H1 (cell line): ENCODE measurements at regions of chr1 and their contacts with region 1.

Region 1: DNA sequence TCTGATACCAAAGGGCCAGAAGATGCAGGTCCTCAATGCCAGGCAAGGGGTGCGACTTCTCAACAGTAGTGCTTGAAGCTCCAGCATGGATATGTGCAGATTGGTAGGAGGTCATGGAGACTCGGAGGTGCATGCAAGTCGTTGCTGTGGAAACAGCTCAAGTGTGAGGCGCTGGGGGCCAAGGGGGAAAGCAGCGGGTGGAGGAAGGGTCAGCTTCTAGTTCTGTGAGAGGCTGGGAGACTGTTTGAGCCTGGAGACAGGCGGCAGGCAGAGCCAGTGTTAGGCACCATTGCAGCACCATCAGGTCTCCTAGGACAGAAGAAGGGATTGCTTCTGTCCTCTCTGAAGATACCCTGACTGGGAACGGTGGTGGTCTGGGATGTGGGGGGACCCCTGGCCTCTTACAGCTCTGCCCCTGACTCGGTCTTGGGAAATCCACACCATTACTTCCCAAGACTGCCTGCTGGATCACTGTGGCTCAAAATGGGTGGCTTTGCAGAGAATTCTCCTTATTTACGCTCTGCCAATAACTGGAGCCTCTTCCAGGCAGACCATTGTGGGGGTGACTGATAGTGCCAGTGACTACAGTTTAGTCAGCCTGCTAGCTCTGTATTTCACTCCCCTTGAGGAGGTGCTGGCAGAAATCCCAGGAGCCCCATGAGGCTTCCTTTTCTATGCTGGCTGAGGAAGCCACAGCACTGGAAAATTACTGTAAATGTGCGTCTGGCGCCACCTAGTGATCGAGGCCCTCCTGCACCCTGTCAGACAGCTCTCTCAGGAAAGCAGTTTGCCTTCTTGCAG is 46.3 kb upstream of the VANGL1 start:
- DNase-seq: peak; percentile 68 to 92
- H3K4me3 ChIP-seq: no peak overlapping the region; a peak in 1 of 8 replicates
- H3K27ac ChIP-seq: no peak overlapping the region
- H3K4me1 ChIP-seq: no peaks in the 10 kb centered on the region
- H3K27me3 ChIP-seq: no peaks in the 10 kb centered on the region
- CTCF ChIP-seq: peak; percentile 89 to 97 (median 96)
- EP300 ChIP-seq: no peak
- POLR2A ChIP-seq: no peak
- RAD21 ChIP-seq: peak; percentile 95

Region 2: DNA sequence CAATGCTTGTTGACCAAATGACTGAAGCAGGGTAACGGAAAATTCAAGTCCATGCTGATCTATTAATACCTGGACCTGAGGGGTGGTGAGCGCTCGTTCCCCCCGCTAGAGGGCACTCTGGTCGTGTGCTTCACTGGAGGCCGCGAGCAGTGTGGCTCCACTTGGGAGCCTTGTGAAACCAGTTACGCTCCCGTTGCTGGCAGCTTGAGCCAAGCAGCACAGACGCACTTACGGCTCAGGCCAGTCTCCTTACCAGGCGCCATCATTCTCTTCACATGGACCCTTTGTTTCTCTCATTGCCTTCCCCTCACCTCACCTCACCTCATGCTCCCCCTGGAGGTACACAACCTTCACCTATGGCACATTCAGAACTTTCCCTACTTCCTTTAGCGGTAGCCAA is 456.5 kb before region 1 on chr1:
- CTCF ChIA-PET with region 1: interaction called, 88 read pairs
- POLR2A ChIA-PET with region 1: no interaction called
- DNase-seq: peak; percentile 82 to 86
- H3K4me3 ChIP-seq: no peak overlapping the region
- H3K27ac ChIP-seq: no peak overlapping the region
- H3K4me1 ChIP-seq: peaks cover 0 to 2% (median 0%) of the 10 kb centered on the region in 4 experiments; a peak in 2 of 7 replicates
- H3K27me3 ChIP-seq: no peaks in the 10 kb centered on the region
- CTCF ChIP-seq: peak; percentile 89 to 93 (median 89)
- EP300 ChIP-seq: no peak
- POLR2A ChIP-seq: no peak
- RAD21 ChIP-seq: peak; percentile 94 to 95

Region 3: DNA sequence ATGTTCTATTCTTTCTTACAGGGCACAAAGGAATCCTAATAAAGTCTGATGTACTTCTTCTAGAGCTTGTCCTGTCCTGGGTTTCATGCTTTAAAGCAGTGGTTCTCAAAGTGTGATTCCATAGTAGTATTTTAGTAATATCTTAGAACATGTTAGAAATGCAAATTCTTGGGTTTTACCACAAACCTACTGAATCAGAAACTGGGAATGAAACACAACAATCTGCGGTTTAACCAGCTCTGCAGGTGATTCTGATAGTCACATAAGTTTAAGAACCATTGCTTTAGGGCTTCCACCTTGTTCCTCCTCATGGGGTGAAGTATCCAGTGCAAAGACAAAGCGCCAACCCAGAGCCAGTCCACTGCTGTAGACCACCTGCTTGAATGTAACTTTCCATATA is 298.5 kb before region 1 on chr1:
- CTCF ChIA-PET with region 1: no interaction called
- POLR2A ChIA-PET with region 1: no interaction called
- DNase-seq: no peak
- H3K4me3 ChIP-seq: no peak overlapping the region
- H3K27ac ChIP-seq: no peak overlapping the region
- H3K4me1 ChIP-seq: peaks cover 0 to 7% (median 3%) of the 10 kb centered on the region in 4 experiments; a peak in 3 of 7 replicates
- H3K27me3 ChIP-seq: 0 out of 7 replicates have a peak, but pooled peaks cover 0 to 1% (median 0%) of the 10 kb centered on the region in 4 experiments
- CTCF ChIP-seq: no peak
- EP300 ChIP-seq: no peak
- POLR2A ChIP-seq: no peak
- RAD21 ChIP-seq: no peak

Region 4: DNA sequence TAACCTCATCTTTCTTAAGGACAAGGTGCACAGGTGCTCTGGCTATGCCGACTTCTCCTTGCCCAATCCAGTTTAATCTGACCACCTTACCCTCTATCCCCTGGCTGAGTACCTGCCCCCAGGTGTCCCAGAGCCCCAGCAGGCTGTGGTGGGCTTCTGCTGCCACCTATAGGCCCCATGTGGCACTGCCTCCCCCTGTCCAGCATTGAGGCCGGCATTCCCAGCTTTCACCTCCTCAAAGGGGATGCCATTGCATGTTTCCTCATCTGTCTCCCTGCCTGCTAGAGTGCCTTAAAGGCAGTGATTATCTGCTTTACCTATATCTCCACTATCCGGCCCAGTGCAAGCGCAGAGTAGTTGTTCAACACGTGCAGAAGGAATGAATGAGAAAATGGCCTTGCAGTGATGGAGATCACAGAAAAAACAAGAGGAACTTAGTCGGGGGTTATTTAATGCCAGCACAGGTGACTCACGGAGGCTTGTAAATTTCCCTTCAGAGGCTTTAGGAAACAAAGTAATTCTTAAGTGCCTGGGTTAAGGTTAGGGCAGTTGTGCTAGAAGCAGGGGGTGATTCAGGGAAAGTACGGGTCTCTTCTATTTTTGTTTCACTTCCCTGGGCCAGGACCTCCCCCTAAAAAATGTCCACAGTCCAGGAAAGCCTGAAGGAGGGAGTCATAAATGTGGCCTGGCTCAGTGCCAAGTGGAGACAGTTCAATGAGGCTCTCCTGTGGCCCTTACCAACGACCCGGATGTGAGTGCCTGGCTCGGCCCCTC is 125.6 kb before region 1 on chr1:
- CTCF ChIA-PET with region 1: interaction called, 31 read pairs
- POLR2A ChIA-PET with region 1: no interaction called
- DNase-seq: peak; percentile 50 to 90
- H3K4me3 ChIP-seq: no peak overlapping the region
- H3K27ac ChIP-seq: no peak overlapping the region
- H3K4me1 ChIP-seq: no peaks in the 10 kb centered on the region
- H3K27me3 ChIP-seq: no peaks in the 10 kb centered on the region
- CTCF ChIP-seq: peak; percentile 96 to 100 (median 98)
- EP300 ChIP-seq: no peak
- POLR2A ChIP-seq: no peak
- RAD21 ChIP-seq: peak; percentile 99

Region 5: DNA sequence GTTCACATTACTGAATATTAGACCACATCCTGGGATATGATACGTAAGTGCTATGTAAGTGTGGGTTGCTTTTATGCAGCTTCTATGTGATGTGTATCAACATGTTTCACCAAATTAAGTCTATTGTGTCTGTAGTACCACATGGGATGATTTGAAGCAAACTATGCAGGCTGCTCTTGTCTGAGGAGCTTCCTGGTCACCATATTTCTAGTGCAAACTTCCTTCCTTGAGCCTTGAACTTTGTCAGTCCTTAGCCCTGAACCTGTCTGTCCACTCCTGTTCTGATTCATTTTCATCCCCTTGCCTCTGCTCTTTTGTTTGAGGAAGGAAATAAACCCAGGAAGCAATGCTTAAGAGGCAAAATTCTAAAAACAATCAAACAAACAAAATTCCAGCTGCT is 71.2 kb before region 1 on chr1:
- CTCF ChIA-PET with region 1: interaction called, 13 read pairs
- POLR2A ChIA-PET with region 1: no interaction called
- DNase-seq: no peak
- H3K4me3 ChIP-seq: no peak overlapping the region
- H3K27ac ChIP-seq: no peak overlapping the region
- H3K4me1 ChIP-seq: peaks cover 0 to 2% (median 0%) of the 10 kb centered on the region in 4 experiments; a peak in 1 of 7 replicates
- H3K27me3 ChIP-seq: no peaks in the 10 kb centered on the region; a peak in 1 of 7 replicates
- CTCF ChIP-seq: no peak
- EP300 ChIP-seq: no peak
- POLR2A ChIP-seq: no peak
- RAD21 ChIP-seq: no peak

Region 6: DNA sequence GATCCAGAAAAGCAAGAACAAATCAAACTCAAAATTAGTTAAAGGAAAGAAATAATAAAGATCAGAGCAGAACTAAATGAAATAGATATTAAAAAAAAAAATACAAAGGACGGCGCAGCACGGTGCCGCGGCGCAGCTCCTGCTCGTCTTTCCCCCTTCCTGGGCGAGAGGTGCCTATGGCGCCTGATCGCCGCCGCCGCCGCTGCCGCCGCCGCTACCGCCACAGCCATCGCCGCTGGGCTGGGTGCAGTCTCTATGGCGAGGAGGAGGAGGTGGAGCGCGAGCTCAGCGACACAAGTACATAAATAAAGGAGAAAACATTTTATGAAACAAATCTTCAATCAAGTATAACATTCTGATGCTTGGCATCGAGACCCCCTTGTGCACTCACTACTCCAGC is 31.3 kb before region 1 on chr1:
- CTCF ChIA-PET with region 1: interaction called, 11 read pairs
- POLR2A ChIA-PET with region 1: no interaction called
- DNase-seq: peak in 1 of 2 experiments; percentile 68
- H3K4me3 ChIP-seq: peak overlapping the region; percentile 14 to 53 (median 26); a peak in 5 of 8 replicates
- H3K27ac ChIP-seq: no peak overlapping the region
- H3K4me1 ChIP-seq: no peaks in the 10 kb centered on the region
- H3K27me3 ChIP-seq: peaks cover 0 to 8% (median under 1%) of the 10 kb centered on the region in 4 experiments; a peak in 5 of 7 replicates
- CTCF ChIP-seq: no peak
- EP300 ChIP-seq: peak in 1 of 2 experiments; percentile 27; a peak in 1 of 3 replicates
- POLR2A ChIP-seq: no peak
- RAD21 ChIP-seq: no peak

Region 7: GRCh38 chr1:115706587-115707425 is 111.3 kb after region 1 on chr1:
- CTCF ChIA-PET with region 1: interaction called, 27 read pairs
- POLR2A ChIA-PET with region 1: no interaction called
- DNase-seq: no peak
- H3K4me3 ChIP-seq: no peak overlapping the region
- H3K27ac ChIP-seq: no peak overlapping the region
- H3K4me1 ChIP-seq: no peaks in the 10 kb centered on the region
- H3K27me3 ChIP-seq: no peaks in the 10 kb centered on the region
- CTCF ChIP-seq: peak in 2 of 3 experiments; percentile 64 to 70; a peak in 3 of 4 replicates
- EP300 ChIP-seq: no peak
- POLR2A ChIP-seq: no peak
- RAD21 ChIP-seq: peak; percentile 66 to 74